Spleen (tissue), 13 donors: ENCODE measurements at regions of chr2 and their contacts with region 1.

Region 1: DNA sequence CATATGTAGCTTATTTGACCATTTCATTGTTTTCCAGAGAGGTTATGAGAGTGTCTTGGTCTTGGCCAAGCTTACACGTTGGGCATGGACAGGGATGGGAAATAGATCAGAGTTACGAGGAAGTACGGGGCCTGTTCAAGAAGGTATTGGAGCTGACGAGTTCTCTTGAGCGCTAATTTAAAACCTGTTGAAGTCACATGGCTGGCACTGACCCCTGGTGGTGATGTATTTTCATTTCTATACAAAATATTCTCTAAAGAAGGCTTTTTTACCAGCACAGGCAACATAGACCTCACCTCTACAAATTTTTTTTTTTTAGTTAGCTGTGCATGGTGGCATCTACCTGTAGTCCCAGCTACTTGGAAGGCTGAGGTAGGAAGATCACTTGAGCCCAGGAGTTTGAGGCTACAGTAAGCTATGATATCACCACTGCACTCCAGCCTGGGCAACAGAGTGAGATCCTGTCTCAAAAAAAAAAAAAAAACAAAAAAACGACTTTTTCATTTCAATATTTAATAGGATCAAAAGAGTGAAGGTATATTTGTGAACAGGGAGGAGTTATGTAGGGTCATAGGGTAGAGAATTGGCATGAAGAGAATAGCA is 19.6 kb downstream of the UGP2 start:
- DNase-seq: no peak
- H3K4me3 ChIP-seq: no peak overlapping the region
- H3K27ac ChIP-seq: peak overlapping the region in 1 of 8 donors; percentile 7
- H3K4me1 ChIP-seq: peaks cover 0 to 44% (median 18%) of the 10 kb centered on the region in 6 donors
- H3K27me3 ChIP-seq: no peaks in the 10 kb centered on the region
- CTCF ChIP-seq: peak in 10 of 11 experiments; percentile 5 to 58 (median 38)
- POLR2A ChIP-seq: no peak

Region 2: GRCh38 chr2:63692002-63692606 is 169.2 kb before region 1 on chr2:
- intact Hi-C with region 1: loop called (anchors 5 kb)
- DNase-seq: no peak
- H3K4me3 ChIP-seq: no peak overlapping the region
- H3K27ac ChIP-seq: no peak overlapping the region
- H3K4me1 ChIP-seq: no peaks in the 10 kb centered on the region
- H3K27me3 ChIP-seq: no peaks in the 10 kb centered on the region
- CTCF ChIP-seq: peak in 8 of 11 experiments; percentile 17 to 59 (median 48)
- POLR2A ChIP-seq: no peak

Region 3: GRCh38 chr2:63772061-63772460 is 89.3 kb before region 1 on chr2:
- intact Hi-C with region 1: no loop called
- DNase-seq: no peak
- H3K4me3 ChIP-seq: no peak overlapping the region
- H3K27ac ChIP-seq: no peak overlapping the region
- H3K4me1 ChIP-seq: no peaks in the 10 kb centered on the region
- H3K27me3 ChIP-seq: no peaks in the 10 kb centered on the region
- CTCF ChIP-seq: no peak
- POLR2A ChIP-seq: no peak

Region 4: GRCh38 chr2:64015391-64015790 is 154.1 kb after region 1 on chr2:
- intact Hi-C with region 1: no loop called
- DNase-seq: no peak
- H3K4me3 ChIP-seq: peak overlapping the region in 1 of 8 donors; percentile 38
- H3K27ac ChIP-seq: peak overlapping the region in 7 of 8 donors; percentile 11 to 98 (median 60)
- H3K4me1 ChIP-seq: peaks cover 10 to 77% (median 47%) of the 10 kb centered on the region in 6 donors
- H3K27me3 ChIP-seq: no peaks in the 10 kb centered on the region
- CTCF ChIP-seq: no peak
- POLR2A ChIP-seq: no peak